Activated CD4-positive, alpha-beta T cell treated with anti-CD3 and anti-CD28 coated beads, Interleukin-2, amount 10 ng/mL, durations not matched to agents 7 days and 5 days (primary cell): ENCODE measurements at regions of chr1 and their contacts with region 1.

Region 1: GRCh38 chr1:222465211-222466041 is 82.5 kb downstream of the HHIPL2 start:
- DNase-seq: peak; percentile 73
- H3K4me3 Mint-ChIP-seq: peak overlapping the region; percentile 68
- H3K27ac Mint-ChIP-seq: peak overlapping the region; percentile 91
- H3K4me1 Mint-ChIP-seq: peaks cover 10% of the 10 kb centered on the region
- H3K27me3 Mint-ChIP-seq: peaks cover 6% of the 10 kb centered on the region

Region 2: GRCh38 chr1:222634180-222635013 is 169.0 kb after region 1 on chr1:
- CTCF ChIA-PET with region 1: interaction called, 12 read pairs
- POLR2A ChIA-PET with region 1: no interaction called
- DNase-seq: peak; percentile 88
- H3K4me3 Mint-ChIP-seq: no peak overlapping the region
- H3K27ac Mint-ChIP-seq: peak overlapping the region; percentile 70
- H3K4me1 Mint-ChIP-seq: peaks cover 15% of the 10 kb centered on the region
- H3K27me3 Mint-ChIP-seq: no peaks in the 10 kb centered on the region